Calu3 (cell line): ENCODE measurements at regions of chrX and their contacts with region 1.

Region 1: GRCh38 chrX:114976292-114976691 is 41.1 kb downstream of the IL13RA2 start:
- DNase-seq: peak; percentile 9
- H3K4me3 Mint-ChIP-seq: no peak overlapping the region
- H3K27ac Mint-ChIP-seq: peak overlapping the region; percentile 84
- H3K4me1 Mint-ChIP-seq: peaks cover 28% of the 10 kb centered on the region
- H3K27me3 Mint-ChIP-seq: no peaks in the 10 kb centered on the region
- CTCF ChIP-seq: no peak

Region 2: DNA sequence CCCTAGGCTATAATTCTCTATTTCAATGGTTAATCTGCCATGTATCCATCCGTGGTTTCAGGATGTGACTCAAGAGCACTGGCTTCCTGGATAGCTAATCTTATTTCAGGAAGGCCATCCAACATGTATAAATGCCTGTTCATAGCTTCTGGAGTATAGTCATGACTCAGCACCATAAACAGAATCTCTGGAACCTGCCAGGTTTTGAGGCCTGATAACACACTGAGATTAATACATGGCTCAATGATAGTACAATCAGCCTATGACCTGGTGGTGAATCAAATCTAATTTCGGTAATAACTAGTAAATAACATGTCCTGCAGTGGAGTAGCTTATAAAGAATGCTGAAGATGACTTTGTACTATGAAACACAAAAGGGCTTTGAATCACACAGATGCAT is 46.8 kb after region 1 on chrX:
- CTCF ChIA-PET with region 1: no interaction called
- intact Hi-C with region 1: loop called (anchors 2 kb)
- DNase-seq: peak; percentile 10
- H3K4me3 Mint-ChIP-seq: no peak overlapping the region
- H3K27ac Mint-ChIP-seq: peak overlapping the region; percentile 40
- H3K4me1 Mint-ChIP-seq: peaks cover 43% of the 10 kb centered on the region
- H3K27me3 Mint-ChIP-seq: no peaks in the 10 kb centered on the region
- CTCF ChIP-seq: no peak